CD8-positive, alpha-beta memory T cell (primary cell): ENCODE measurements at regions of chr1 and their contacts with region 1.

Region 1: GRCh38 chr1:84573967-84574842 is at the start of gene CTBS:
- DNase-seq: peak; percentile 78 to 90 (median 84)
- H3K4me3 ChIP-seq: peak within 1 kb of the TSS; percentile 91
- H3K4me3 Mint-ChIP-seq: peak within 1 kb of the TSS; percentile 93 to 99 (median 97)
- H3K27ac ChIP-seq: peak within 1 kb of the TSS; percentile 97
- H3K27ac Mint-ChIP-seq: peak within 1 kb of the TSS; percentile 95 to 100 (median 99)
- H3K4me1 ChIP-seq: peaks cover 26% of the 10 kb centered on the region
- H3K4me1 Mint-ChIP-seq: peaks cover 39 to 48% (median 45%) of the 10 kb centered on the region in 3 donors
- H3K27me3 ChIP-seq: no peaks in the 10 kb centered on the region
- H3K27me3 Mint-ChIP-seq: no peaks in the 10 kb centered on the region
- total RNA-seq, gene CTBS: 8.8 to 9.1 TPM

Region 2: GRCh38 chr1:84478876-84479868 is 95.0 kb before region 1 on chr1 and contains the start of gene RPF1:
- CTCF ChIA-PET with region 1: interaction called, 6 read pairs
- POLR2A ChIA-PET with region 1: interaction called, 12 read pairs
- DNase-seq: peak; percentile 68 to 89 (median 85)
- H3K4me3 ChIP-seq: peak within 1 kb of the TSS; percentile 54
- H3K4me3 Mint-ChIP-seq: peak within 1 kb of the TSS; percentile 98 to 100 (median 99)
- H3K27ac ChIP-seq: peak within 1 kb of the TSS; percentile 85
- H3K27ac Mint-ChIP-seq: peak within 1 kb of the TSS; percentile 97 to 100 (median 99)
- H3K4me1 ChIP-seq: peaks cover 35% of the 10 kb centered on the region
- H3K4me1 Mint-ChIP-seq: peaks cover 39 to 55% (median 47%) of the 10 kb centered on the region in 3 donors
- H3K27me3 ChIP-seq: no peaks in the 10 kb centered on the region
- H3K27me3 Mint-ChIP-seq: peaks cover 17 to 38% of the 10 kb centered on the region in 2 donors
- total RNA-seq, gene RPF1: 60.1 to 63.5 TPM

Region 3: GRCh38 chr1:84653130-84653677 is 79.0 kb after region 1 on chr1:
- CTCF ChIA-PET with region 1: no interaction called
- POLR2A ChIA-PET with region 1: no interaction called
- DNase-seq: no peak
- H3K4me3 ChIP-seq: no peak overlapping the region
- H3K4me3 Mint-ChIP-seq: no peak overlapping the region
- H3K27ac ChIP-seq: no peak overlapping the region
- H3K27ac Mint-ChIP-seq: no peak overlapping the region
- H3K4me1 ChIP-seq: no peaks in the 10 kb centered on the region
- H3K4me1 Mint-ChIP-seq: no peaks in the 10 kb centered on the region
- H3K27me3 ChIP-seq: no peaks in the 10 kb centered on the region
- H3K27me3 Mint-ChIP-seq: no peaks in the 10 kb centered on the region